Heart right ventricle (tissue), 16 donors: ENCODE measurements at regions of chr7 and their contacts with region 1.

Region 1: DNA sequence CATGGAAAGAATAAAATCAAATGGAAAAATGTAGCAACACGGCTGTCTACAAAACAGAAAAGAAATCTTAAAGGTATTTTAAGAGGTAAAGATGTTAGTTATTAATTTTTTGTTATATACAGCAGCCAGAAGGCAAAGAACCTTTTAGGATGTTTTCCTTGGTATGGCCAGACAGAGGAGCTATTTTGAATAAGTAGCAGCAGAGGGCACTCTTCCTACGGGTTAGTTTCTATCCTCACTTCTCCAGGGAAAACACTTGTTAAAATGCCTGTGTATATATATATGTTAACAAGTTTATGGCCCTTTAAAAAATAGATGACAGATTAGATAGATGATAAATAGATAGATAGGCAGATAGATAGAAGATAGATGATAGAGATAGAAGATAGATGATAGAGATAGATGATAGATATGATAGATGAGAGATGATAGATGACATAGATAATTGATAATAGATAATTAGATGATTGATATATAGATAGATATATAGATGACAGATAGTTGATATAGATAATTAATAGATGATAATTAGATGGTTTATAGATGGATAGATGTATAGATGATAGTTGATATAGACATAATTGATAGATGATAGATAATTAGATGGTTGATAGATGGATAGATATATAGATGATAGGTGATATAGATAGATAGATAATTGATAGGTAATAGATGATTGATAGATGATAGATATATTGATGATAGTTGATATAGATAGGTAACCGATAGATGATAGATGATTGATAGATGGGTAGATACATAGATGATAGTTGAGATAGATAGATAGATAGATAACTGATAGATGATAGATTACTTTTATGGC is 57.8 kb upstream of the WIPF3 start:
- DNase-seq: no peak
- ATAC-seq: peak in 7 of 8 donors; percentile 66 to 82 (median 75)
- H3K4me3 ChIP-seq: no peak overlapping the region
- H3K27ac ChIP-seq: no peak overlapping the region
- H3K4me1 ChIP-seq: peaks cover 0 to 16% (median 4%) of the 10 kb centered on the region in 9 donors
- H3K27me3 ChIP-seq: no peaks in the 10 kb centered on the region
- CTCF ChIP-seq: peak; percentile 18 to 80 (median 64)

Region 2: DNA sequence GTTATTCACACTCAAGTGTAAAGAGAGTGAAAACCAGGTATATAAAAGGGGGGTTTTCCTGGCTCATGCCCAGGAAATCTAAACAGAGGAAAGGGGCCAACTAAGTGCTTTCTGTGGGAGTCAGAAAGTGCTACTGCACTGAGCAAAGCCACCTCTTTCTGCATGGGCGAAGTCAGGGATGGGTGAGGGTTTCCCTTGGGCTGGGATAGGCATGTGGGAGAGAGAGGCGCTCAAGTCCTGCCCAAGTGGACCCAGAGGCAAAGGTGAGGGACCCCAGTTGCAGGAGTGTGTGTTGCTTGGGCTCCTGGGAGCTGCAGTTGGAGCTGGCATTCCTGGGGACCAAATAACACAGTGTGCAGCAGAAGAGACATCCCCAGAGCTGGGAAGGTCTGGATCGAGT is 119.0 kb before region 1 on chr7:
- intact Hi-C with region 1: loop called in 4 of 10 experiments (anchors 1 to 10 kb)
- DNase-seq: no peak
- ATAC-seq: no peak
- H3K4me3 ChIP-seq: no peak overlapping the region
- H3K27ac ChIP-seq: no peak overlapping the region
- H3K4me1 ChIP-seq: no peaks in the 10 kb centered on the region
- H3K27me3 ChIP-seq: peaks cover 0 to 24% (median 0%) of the 10 kb centered on the region in 7 donors
- CTCF ChIP-seq: no peak

Region 3: DNA sequence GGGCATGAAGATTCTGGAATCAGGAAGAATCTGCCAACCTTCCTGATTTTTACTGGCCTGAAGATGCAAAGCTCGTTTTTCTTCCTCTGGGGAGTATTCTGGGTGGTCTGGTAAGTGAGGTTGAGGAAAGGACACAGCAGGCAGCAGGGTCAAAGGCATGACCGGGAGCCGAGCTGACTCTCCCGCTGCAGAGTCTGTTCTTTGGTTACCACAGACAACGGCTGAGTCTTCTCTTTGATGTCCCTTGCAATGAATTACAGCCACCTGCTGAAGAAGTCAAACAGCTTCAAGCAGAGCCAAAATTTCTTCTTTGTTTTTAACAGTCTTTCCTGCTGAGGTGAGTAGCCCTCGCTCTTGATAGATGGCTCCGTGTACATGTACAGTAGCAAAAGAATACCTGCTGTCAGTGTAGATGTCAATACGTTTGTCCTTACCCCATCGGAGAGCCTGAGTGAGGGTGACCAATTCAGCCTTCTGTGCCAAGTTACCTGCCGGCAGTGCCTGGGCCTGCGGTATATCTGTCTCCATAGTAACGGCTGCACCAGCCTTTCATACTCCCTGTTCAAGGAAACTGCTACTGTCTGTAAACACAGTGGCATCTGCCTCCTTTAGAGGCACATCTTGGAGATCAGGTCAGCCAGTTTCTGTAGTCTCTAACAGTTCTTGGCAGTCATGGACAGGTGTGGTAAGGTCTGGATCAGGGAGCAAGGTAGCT is 108.5 kb before region 1 on chr7:
- intact Hi-C with region 1: loop called in 4 of 10 experiments (anchors 10 kb)
- DNase-seq: no peak
- ATAC-seq: no peak
- H3K4me3 ChIP-seq: no peak overlapping the region
- H3K27ac ChIP-seq: no peak overlapping the region
- H3K4me1 ChIP-seq: peaks cover 0 to 11% (median 0%) of the 10 kb centered on the region in 9 donors
- H3K27me3 ChIP-seq: no peaks in the 10 kb centered on the region
- CTCF ChIP-seq: no peak

Region 4: GRCh38 chr7:29806208-29806994 is 57.9 kb after region 1 on chr7 and contains the start of gene WIPF3:
- intact Hi-C with region 1: loop called in 1 of 10 experiments (anchors 10 kb)
- DNase-seq: peak; percentile 14 to 44
- ATAC-seq: peak; percentile 56 to 86 (median 75)
- H3K4me3 ChIP-seq: peak within 1 kb of the TSS; percentile 0 to 84 (median 64)
- H3K27ac ChIP-seq: peak within 1 kb of the TSS; percentile 17 to 83 (median 74)
- H3K4me1 ChIP-seq: peaks cover 0 to 16% (median 15%) of the 10 kb centered on the region in 9 donors
- H3K27me3 ChIP-seq: peaks cover 0 to 68% (median 0%) of the 10 kb centered on the region in 7 donors
- CTCF ChIP-seq: no peak
- total RNA-seq, gene WIPF3: 4.4 to 15.4 (median 7.7) TPM

Region 5: DNA sequence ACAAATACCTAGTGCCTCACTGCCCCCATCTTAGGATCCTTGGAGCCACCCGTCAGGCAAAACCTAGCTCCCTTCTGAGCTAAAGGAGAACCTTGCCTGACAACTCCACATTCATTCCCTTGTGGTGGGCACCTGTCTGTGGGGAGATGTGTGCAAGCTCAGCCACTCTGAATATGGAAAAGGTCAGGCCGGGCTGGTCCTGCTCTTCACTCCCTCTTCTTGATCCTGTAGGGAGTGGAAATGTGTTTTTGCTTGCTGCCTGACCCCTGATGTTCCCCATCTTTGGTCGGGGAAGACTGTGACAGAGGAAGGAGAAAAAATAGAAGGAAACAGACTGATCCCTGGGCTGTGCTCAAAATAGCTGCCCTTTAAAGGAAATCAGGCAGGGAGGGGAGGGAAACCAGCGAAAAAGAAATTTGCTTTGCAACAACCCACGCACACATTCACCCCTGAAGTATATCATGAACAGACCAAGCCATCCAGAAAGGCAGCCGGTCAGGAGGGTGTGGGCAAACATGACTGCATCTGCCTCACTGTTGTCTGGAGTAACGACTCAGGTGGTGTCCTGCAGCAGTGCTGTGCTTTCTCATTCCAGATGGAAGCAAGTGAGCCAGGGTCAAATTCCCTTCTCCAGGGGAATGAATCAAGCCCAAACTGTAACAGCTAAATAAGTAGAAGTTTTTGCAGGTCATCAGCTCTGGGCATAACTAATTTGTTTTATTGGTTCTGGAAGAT is 167.2 kb after region 1 on chr7:
- intact Hi-C with region 1: loop called in 8 of 10 experiments (anchors 2 to 5 kb)
- DNase-seq: no peak
- ATAC-seq: peak in 2 of 8 donors; percentile 19 to 49
- H3K4me3 ChIP-seq: no peak overlapping the region
- H3K27ac ChIP-seq: no peak overlapping the region
- H3K4me1 ChIP-seq: peaks cover 0 to 12% (median 7%) of the 10 kb centered on the region in 9 donors
- H3K27me3 ChIP-seq: no peaks in the 10 kb centered on the region
- CTCF ChIP-seq: no peak

Region 6: GRCh38 chr7:29921404-29922010 is 173.0 kb after region 1 on chr7:
- intact Hi-C with region 1: loop called (anchors 1 to 5 kb)
- DNase-seq: peak in 1 of 2 donors; percentile 51
- ATAC-seq: peak in 7 of 8 donors; percentile 73 to 88 (median 85)
- H3K4me3 ChIP-seq: no peak overlapping the region
- H3K27ac ChIP-seq: no peak overlapping the region
- H3K4me1 ChIP-seq: no peaks in the 10 kb centered on the region
- H3K27me3 ChIP-seq: no peaks in the 10 kb centered on the region
- CTCF ChIP-seq: peak; percentile 84 to 93 (median 90)

Region 7: GRCh38 chr7:30062591-30062990 is 314.1 kb after region 1 on chr7:
- intact Hi-C with region 1: loop called in 4 of 10 experiments (anchors 10 kb)
- DNase-seq: no peak
- ATAC-seq: peak in 5 of 8 donors; percentile 63 to 78 (median 73)
- H3K4me3 ChIP-seq: no peak overlapping the region
- H3K27ac ChIP-seq: no peak overlapping the region
- H3K4me1 ChIP-seq: peaks cover 0 to 1% (median 0%) of the 10 kb centered on the region in 9 donors
- H3K27me3 ChIP-seq: no peaks in the 10 kb centered on the region
- CTCF ChIP-seq: peak; percentile 28 to 70 (median 63)